BJ (cell line): ENCODE measurements at regions of chr3 and their contacts with region 1.

Region 1: GRCh38 chr3:143674100-143674968 is 173.9 kb downstream of the SLC9A9 start:
- DNase-seq: no peak
- H3K4me3 ChIP-seq: no peak overlapping the region
- H3K27me3 ChIP-seq: no peaks in the 10 kb centered on the region; the same call in 1 of the 2 replicates
- CTCF ChIP-seq: peak; percentile 92

Region 2: DNA sequence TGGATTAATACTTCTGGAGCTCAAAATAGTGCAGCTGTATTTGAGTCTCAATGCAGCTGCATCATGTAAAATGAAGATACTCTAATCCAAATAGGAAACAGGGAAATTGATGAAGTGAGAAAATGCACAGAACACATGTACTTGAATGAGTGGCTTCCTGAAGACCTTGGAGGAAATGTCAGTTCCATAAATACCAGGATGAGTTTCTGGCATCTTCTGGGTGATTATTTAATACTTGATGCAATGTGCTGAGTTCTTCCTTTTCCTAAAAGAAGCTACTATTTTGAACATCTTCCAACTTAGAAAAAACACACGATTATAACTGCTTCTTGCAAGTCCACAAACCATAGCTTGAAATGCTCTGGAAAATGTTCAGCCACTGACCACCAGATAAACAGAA is 11.2 kb after region 1 on chr3:
- CTCF ChIA-PET with region 1: interaction called, 20 read pairs
- POLR2A ChIA-PET with region 1: no interaction called
- DNase-seq: no peak
- H3K4me3 ChIP-seq: no peak overlapping the region
- H3K27me3 ChIP-seq: no peaks in the 10 kb centered on the region
- CTCF ChIP-seq: no peak